ENCODE measurements at regions of chr3 and their contacts with region 1.

Region 1: DNA sequence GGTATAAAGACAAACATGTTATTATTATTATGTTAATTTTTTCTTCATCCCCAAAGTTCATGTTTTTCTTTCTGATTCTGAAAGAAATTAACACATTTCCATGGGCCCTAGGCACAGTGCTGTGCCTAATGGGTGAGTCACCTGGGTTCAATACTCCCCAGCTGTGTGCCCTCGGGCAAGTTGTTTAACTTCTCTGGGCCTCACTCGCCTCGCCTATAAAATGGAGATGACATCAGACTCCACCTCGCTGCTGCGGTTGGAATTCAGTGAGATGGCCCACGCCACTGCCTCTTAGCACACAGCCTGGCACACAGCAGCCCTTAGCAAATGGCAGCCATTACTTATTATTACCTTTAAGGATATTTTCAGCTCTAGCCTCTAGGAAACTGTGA is 22.6 kb downstream of the DNASE1L3 start:
- DNase-seq: no peak
- H3K4me3 Mint-ChIP-seq: no peak overlapping the region
- H3K27ac Mint-ChIP-seq: no peak overlapping the region
- H3K4me1 Mint-ChIP-seq: no peaks in the 10 kb centered on the region
- H3K27me3 Mint-ChIP-seq: no peaks in the 10 kb centered on the region

Region 2: DNA sequence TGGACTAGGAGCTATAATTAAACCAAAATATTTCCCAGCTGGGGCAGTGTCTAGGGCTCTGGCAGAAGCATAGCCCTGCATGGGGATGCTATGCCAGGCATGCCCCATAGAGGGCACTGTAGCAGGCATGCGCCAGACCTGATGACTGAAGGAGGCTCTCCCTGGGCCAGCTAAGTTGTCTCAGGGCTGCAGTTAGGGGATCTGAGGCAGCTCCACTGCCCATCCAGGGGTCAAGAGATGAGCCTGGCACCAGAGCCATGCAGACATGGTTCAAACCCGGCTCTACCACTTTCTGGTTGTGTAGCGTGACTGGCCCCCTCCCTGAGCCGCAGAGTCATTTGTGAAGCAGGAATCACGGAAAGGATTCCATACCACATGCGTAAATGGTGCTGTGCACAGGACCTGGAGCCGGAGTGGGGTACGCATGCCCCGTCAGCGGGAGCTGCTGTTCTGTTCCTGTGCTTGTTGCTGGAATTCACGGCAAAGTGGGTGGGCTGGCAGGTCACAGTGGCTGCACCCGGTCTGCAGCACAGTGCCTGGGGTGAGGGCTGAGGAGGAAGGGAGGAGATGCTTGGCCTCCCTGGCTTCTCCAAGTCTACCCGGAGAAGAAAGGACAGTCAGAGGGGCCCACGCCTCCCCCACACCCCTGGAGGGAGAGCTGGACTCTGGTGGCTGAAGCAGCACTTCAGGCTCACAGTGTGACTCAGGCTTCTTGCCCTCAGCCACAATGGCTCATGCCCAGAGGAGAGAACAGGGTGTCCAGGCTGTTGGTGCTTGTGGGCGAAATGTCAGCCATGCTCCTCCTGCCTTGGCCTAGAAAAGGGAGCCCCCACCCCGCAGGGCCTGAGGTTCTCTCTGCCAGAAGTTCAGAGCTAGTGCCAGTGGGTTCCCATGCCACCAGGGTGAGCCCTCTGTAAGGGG is 20.5 kb before region 1 on chr3:
- CTCF ChIA-PET with region 1: interaction called, 28 read pairs
- intact Hi-C with region 1: no loop called
- DNase-seq: peak; percentile 79
- H3K4me3 Mint-ChIP-seq: no peak overlapping the region
- H3K27ac Mint-ChIP-seq: no peak overlapping the region
- H3K4me1 Mint-ChIP-seq: no peaks in the 10 kb centered on the region
- H3K27me3 Mint-ChIP-seq: no peaks in the 10 kb centered on the region

Region 3: GRCh38 chr3:58177747-58178527 is 10.2 kb before region 1 on chr3:
- CTCF ChIA-PET with region 1: interaction called, 11 read pairs
- intact Hi-C with region 1: no loop called
- DNase-seq: peak; percentile 95
- H3K4me3 Mint-ChIP-seq: peak overlapping the region; percentile 59
- H3K27ac Mint-ChIP-seq: no peak overlapping the region
- H3K4me1 Mint-ChIP-seq: peaks cover 13% of the 10 kb centered on the region
- H3K27me3 Mint-ChIP-seq: peaks cover 6% of the 10 kb centered on the region

Region 4: GRCh38 chr3:58237238-58237940 is 49.2 kb after region 1 on chr3 and contains the start of gene ABHD6:
- CTCF ChIA-PET with region 1: interaction called, 4 read pairs
- intact Hi-C with region 1: loop called (anchors 1 kb)
- DNase-seq: peak; percentile 75
- H3K4me3 Mint-ChIP-seq: peak within 1 kb of the TSS; percentile 86
- H3K27ac Mint-ChIP-seq: peak within 1 kb of the TSS; percentile 46
- H3K4me1 Mint-ChIP-seq: peaks cover 10% of the 10 kb centered on the region
- H3K27me3 Mint-ChIP-seq: peaks cover 6% of the 10 kb centered on the region
- total RNA-seq, gene ABHD6: 1.1 to 1.6 TPM

Region 5: GRCh38 chr3:58299839-58300516 is 111.8 kb after region 1 on chr3:
- CTCF ChIA-PET with region 1: interaction called, 31 read pairs
- intact Hi-C with region 1: loop called (anchors 1 kb)
- DNase-seq: no peak
- H3K4me3 Mint-ChIP-seq: no peak overlapping the region
- H3K27ac Mint-ChIP-seq: no peak overlapping the region
- H3K4me1 Mint-ChIP-seq: no peaks in the 10 kb centered on the region
- H3K27me3 Mint-ChIP-seq: peaks cover 18% of the 10 kb centered on the region

Region 6: DNA sequence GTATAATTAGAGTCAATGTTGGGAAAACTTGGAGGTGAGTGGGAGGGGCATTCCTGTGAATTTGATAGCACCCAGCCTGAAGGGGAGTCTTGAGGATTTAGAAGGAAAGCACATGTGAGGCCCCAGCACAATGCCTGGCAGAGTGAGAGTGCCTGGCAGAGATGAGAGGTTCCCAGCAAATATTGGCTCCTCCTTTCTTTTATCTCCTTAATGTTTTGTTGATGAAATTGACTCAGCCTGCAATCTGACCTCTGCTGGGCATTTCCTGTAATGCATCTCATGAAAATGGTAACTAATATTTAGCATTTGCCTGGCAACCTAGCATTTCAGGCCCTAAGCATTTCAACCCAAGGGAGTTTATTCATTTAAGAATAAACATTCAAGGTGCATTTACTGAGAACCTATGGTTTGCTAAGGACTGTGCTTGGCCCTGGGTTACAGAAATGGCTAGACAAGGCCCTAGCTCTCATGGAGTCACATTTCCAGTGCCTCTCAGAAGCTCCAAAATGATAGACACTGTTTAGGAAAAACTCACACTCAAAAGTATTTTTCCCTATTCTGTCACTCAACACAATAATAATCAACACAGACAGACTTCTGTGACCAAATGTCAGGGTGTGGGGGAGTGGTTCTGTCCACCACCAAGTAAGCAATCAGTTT is 226.5 kb after region 1 on chr3:
- CTCF ChIA-PET with region 1: interaction called, 4 read pairs
- intact Hi-C with region 1: loop called (anchors 1 kb)
- DNase-seq: peak; percentile 68
- H3K4me3 Mint-ChIP-seq: no peak overlapping the region
- H3K27ac Mint-ChIP-seq: no peak overlapping the region
- H3K4me1 Mint-ChIP-seq: peaks cover 6% of the 10 kb centered on the region
- H3K27me3 Mint-ChIP-seq: no peaks in the 10 kb centered on the region